ENCODE measurements at regions of chr16 and their contacts with region 1.

Region 1: DNA sequence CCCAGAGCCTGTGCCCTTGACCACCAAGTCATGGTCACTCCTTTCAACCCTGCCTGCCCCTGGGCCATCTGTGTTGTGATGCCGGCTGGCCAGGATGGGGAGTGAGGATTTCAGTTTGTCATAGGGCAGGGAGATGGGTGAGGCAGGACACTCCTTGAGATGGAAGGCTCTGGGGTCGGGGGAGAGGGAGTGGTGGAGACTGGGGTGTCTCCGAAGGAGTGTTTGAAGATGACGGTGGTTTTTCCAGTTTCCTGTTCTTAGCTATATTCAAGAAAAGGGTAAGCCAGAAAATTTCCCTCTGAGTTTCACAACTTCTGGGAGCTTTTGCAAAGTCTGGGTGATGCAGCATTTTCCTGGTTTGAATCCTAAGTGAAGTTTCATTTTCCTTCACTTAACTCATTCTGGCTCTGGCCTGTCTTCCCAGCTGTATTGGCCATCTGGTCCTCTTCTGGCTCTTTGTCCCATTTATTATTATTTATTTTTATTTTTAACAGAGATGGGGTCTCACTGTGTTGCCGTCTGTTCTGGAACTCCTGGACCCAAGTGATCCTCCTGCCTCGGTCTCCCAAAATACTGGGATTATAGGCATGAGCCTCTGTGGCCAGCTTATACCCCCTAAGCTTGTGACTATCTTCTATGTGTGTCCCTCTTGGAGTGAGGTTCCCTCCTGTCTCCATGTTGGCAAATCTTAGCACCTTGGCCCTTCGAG is 27.7 kb downstream of the ABCC1 start:
- DNase-seq: peak; percentile 51
- H3K4me3 ChIP-seq: no peak overlapping the region
- H3K27me3 ChIP-seq: no peaks in the 10 kb centered on the region
- CTCF ChIP-seq: no peak

Region 2: GRCh38 chr16:15509593-15510535 is 467.2 kb before region 1 on chr16:
- CTCF ChIA-PET with region 1: no interaction called
- POLR2A ChIA-PET with region 1: no interaction called
- DNase-seq: no peak
- H3K4me3 ChIP-seq: no peak overlapping the region
- H3K27me3 ChIP-seq: no peaks in the 10 kb centered on the region
- CTCF ChIP-seq: peak; percentile 22; the same call in 1 of the 2 replicates

Region 3: DNA sequence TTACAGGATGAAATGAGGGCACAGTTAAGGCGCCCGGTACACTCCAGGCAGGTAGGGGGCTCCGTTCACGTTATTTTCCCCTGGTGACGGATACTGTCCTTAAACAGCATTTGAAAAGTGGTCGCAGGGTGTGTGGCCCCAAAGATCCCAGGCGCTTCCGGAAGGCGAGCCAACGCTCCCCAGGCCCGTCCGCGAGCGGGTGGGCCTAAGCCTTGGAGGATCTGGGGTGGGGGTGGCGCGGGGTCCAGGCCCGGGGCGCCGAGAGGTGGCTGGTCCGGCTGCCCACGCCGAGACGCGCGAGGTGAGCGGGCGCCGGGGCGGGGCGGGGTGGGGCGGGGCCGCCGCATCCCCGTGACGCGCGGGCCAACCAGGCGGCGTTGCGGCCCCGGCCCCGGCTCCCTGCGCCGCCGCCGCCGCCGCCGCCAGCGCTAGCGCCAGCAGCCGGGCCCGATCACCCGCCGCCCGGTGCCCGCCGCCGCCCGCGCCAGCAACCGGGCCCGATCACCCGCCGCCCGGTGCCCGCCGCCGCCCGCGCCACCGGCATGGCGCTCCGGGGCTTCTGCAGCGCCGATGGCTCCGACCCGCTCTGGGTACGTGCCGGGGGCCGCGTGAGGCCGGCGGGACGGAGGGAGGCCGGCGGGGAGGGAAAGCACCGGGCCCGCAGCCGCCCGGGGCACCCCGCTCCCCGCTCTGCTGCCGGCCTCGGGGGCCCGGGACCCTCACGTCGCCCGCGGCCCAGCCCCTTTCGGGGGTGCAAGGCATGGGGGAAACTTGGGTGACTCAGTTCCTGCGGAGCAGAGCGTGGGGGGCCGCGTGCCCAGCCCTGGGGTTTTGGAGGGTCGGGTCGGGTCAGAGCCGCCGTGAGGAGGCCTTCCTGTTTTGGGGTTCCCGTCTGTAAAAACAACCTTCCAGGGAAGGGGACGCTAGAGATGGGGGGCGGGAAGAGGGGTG is 27.6 kb before region 1 on chr16 and contains the start of gene ABCC1:
- CTCF ChIA-PET with region 1: no interaction called
- POLR2A ChIA-PET with region 1: no interaction called
- DNase-seq: no peak
- H3K4me3 ChIP-seq: peak within 1 kb of the TSS; percentile 82
- H3K27me3 ChIP-seq: no peaks in the 10 kb centered on the region
- CTCF ChIP-seq: 0 out of 2 replicates have a peak, but pooled peaks have one; percentile 1
- polyA plus RNA-seq, gene ABCC1: 17.0 and 27.3 TPM in 2 replicates

Region 4: DNA sequence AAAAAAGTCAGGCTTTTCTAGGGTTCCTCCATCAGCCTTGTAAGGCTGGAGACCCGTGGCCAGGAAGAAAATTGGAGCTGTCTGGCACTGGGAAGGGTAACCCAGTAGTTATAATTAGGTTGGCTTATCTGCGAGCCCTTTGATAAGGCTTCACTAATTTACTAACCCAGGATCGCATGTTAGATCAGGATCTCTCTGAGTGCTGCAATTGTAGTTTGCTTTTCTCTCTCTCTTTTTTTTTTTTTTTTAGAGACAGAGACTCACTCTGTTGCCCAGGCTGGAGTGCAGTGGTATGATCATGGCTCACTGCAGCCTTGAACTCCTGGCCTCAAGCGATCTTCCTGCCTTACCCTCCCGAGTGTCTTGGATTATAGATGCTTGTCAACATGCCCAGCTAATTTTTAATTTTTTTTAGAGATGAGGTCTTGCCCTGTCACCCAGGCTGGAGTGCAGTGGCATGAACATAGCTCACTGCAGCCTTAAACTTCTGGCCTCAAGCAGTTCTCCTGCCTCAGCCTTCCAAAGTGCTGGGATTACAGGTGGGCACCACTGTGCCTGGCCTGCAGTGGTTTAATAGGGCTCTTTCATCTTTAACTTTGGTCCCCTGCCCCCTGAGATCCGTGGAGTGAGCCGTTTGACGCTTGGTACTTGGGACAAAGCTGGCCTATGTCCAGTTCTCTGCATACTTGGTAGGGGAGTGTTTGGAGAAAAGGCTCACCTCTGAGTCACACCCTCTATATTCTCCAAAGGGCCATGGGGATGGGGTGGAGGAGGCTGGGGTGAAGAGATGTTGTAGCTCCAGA is 10.5 kb before region 1 on chr16:
- CTCF ChIA-PET with region 1: no interaction called
- POLR2A ChIA-PET with region 1: interaction called, 11 read pairs
- DNase-seq: no peak
- H3K4me3 ChIP-seq: no peak overlapping the region
- H3K27me3 ChIP-seq: no peaks in the 10 kb centered on the region
- CTCF ChIP-seq: no peak

Measured in BJ (cell line).